Right lobe of liver (tissue), 6 donors: ENCODE measurements at regions of chr18 and their contacts with region 1.

Region 1: GRCh38 chr18:10748641-10749040 is 222.8 kb downstream of the NAPG start:
- DNase-seq: no peak
- ATAC-seq: no peak
- H3K4me3 ChIP-seq: no peak overlapping the region
- H3K27ac ChIP-seq: no peak overlapping the region
- H3K4me1 ChIP-seq: no peaks in the 10 kb centered on the region
- H3K27me3 ChIP-seq: no peaks in the 10 kb centered on the region
- CTCF ChIP-seq: no peak
- POLR2A ChIP-seq: no peak

Region 2: DNA sequence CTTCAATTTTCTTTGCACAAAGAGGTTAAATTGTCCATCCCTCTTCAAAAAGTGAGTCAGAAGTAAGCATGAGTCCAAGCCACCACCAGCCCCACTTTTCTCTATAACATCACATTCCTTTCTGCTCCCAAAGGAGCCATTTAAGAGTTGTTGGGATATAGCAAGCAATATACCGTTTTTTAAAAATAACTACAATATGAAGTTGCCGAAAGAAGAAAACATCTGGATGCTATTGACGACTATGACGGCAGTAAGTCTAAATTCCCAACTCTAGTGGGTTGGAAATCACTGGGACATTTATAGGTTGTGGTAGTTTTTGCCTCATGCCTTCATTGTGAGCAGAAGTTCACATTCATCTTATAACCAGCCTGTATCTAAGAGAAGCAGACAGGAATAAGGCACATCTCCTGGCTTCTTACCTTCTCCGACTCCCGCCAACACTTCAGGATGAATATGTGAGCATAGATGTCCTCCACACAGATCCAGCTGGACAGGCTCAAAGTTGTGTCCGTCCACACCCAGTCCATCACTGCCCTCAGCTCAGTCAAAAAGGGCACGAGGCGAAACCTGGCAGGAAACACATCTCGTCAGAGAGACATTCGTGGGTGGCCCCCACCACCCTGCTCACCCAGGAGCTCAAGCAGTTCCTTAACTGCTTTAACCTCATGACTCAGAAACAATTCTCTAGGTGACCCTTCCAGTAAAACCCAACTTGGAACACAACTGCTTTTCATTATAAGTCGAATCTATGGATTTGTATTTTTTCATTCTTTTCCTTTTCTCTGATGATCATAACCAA is 59.2 kb before region 1 on chr18:
- intact Hi-C with region 1: loop called in 1 of 2 experiments (anchors 10 kb)
- DNase-seq: no peak
- ATAC-seq: no peak
- H3K4me3 ChIP-seq: no peak overlapping the region
- H3K27ac ChIP-seq: no peak overlapping the region
- H3K4me1 ChIP-seq: no peaks in the 10 kb centered on the region
- H3K27me3 ChIP-seq: no peaks in the 10 kb centered on the region
- CTCF ChIP-seq: no peak
- POLR2A ChIP-seq: no peak

Region 3: DNA sequence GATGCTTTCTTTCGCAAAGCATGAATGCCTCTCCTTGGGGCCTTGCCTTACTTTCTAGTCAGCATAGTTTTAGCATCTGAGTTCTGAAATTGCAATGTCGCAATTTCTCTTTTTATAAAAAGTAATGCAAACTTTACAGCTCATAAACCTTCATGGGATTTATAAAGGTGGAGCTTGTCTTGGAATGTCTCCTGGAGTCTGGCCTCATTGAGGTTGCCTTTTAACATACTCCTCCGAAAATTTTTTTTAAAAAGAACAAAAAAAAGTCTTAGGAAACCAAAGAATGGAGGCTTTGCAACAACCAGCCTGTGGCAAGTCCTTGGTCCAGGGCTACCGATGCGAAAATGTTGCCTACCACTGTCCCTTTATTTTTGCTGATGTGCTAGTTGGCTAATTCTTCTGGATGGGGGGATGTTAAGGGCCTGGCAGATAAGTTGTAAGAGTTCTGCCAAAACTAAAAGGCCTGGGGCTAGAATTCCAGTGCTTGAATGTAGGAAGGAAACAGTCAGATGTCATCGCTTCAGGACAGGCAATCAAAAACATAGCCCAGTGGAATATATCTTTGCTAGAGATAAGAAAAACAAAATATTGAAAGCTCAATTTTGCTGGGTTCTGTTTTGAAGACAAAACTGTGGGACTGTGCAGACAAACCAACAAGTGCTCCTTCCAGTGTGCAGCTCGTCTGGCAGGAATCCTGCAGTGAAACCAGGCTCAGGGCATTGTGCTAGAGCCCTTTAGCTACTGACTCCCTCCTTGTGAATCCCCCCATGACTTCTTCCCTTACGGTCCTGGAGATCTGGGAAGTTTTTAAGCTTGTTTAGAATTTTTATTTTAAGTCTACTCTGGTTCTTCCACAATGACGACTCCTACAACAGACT is 187.8 kb after region 1 on chr18:
- intact Hi-C with region 1: no loop called
- DNase-seq: no peak
- ATAC-seq: peak in 3 of 4 donors; percentile 19 to 51 (median 26)
- H3K4me3 ChIP-seq: no peak overlapping the region
- H3K27ac ChIP-seq: no peak overlapping the region
- H3K4me1 ChIP-seq: no peaks in the 10 kb centered on the region
- H3K27me3 ChIP-seq: no peaks in the 10 kb centered on the region
- CTCF ChIP-seq: no peak
- POLR2A ChIP-seq: no peak

Region 4: DNA sequence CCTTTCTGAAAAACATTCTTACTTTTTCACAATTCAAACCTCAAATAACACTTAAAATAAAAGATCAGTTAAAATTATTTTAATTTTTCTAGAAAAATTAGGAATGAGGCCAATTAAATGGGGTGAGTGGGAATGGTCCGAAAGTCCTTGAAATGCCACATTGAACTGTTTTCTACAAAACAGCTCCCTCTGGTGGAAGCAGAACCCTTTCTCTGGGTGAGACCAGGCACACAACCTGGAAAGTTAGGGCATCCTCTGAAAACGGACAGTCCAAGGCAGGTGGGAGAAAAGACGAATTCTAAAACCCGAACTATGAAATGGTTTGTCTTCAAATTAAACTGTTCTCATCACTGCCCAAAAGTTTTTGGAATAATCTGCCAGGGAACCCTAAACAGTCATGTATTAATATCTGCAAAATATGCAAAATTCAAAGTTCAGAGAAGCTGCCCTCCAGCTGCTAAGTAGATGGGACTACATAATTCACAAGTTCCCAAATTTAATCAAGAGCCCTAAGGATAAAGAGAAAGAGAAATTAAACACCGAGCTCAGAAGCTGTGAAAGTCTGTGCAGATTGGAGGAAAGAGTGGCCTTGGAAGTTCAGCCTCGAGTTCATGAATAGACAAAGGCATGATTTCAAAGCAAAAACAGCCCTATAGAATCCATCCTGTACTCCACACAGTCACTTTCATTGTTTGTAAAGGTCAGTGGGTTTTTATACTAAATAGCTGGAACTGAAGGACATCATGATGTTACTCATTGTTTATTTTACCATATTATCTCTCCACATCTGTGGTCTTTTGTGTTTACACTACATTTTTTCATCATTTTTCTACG is 292.4 kb after region 1 on chr18:
- intact Hi-C with region 1: no loop called
- DNase-seq: peak in 1 of 3 donors; percentile 73
- ATAC-seq: peak; percentile 88 to 91 (median 89)
- H3K4me3 ChIP-seq: no peak overlapping the region
- H3K27ac ChIP-seq: no peak overlapping the region
- H3K4me1 ChIP-seq: peaks cover 0 to 7% (median 2%) of the 10 kb centered on the region in 4 donors
- H3K27me3 ChIP-seq: no peaks in the 10 kb centered on the region
- CTCF ChIP-seq: peak; percentile 72 to 83 (median 77)
- POLR2A ChIP-seq: no peak

Region 5: DNA sequence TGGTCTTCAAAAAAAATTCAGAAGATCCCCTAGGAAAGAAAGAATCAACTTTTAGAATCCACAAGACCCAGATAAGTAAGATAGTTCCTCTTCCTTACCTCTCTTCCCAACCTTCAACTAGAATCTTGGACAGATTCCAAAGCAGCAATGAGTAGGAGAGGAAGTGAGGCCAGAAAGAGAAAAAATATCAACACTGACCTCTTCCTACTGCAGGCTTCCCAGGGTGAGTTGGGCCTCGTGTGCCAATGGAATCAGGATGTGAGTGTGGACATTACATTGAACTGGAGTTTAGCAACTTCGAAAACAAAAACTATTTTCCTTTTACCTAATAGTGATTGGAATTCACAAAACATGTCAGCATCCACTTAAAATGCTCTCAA is 503.2 kb after region 1 on chr18:
- intact Hi-C with region 1: no loop called
- DNase-seq: peak in 1 of 3 donors; percentile 29
- ATAC-seq: peak; percentile 59 to 92 (median 68)
- H3K4me3 ChIP-seq: no peak overlapping the region
- H3K27ac ChIP-seq: no peak overlapping the region
- H3K4me1 ChIP-seq: peaks cover 0 to 9% (median 0%) of the 10 kb centered on the region in 4 donors
- H3K27me3 ChIP-seq: no peaks in the 10 kb centered on the region
- CTCF ChIP-seq: no peak
- POLR2A ChIP-seq: no peak